ENCODE measurements at regions of chr5 and their contacts with region 1.

Region 1: GRCh38 chr5:126422989-126423788 is at the start of gene GRAMD2B:
- DNase-seq: peak; percentile 83
- H3K4me3 Mint-ChIP-seq: peak within 1 kb of the TSS; percentile 82
- H3K27ac Mint-ChIP-seq: peak within 1 kb of the TSS; percentile 87
- H3K4me1 Mint-ChIP-seq: peaks cover 38% of the 10 kb centered on the region
- H3K27me3 Mint-ChIP-seq: no peaks in the 10 kb centered on the region
- total RNA-seq, gene GRAMD2B: 9.9 to 10.4 TPM

Region 2: GRCh38 chr5:126370796-126371718 is 52.1 kb before region 1 on chr5:
- CTCF ChIA-PET with region 1: no interaction called
- POLR2A ChIA-PET with region 1: no interaction called
- intact Hi-C with region 1: loop called (anchors 2 kb)
- DNase-seq: no peak
- H3K4me3 Mint-ChIP-seq: no peak overlapping the region
- H3K27ac Mint-ChIP-seq: no peak overlapping the region
- H3K4me1 Mint-ChIP-seq: peaks cover 15% of the 10 kb centered on the region
- H3K27me3 Mint-ChIP-seq: no peaks in the 10 kb centered on the region

Region 3: DNA sequence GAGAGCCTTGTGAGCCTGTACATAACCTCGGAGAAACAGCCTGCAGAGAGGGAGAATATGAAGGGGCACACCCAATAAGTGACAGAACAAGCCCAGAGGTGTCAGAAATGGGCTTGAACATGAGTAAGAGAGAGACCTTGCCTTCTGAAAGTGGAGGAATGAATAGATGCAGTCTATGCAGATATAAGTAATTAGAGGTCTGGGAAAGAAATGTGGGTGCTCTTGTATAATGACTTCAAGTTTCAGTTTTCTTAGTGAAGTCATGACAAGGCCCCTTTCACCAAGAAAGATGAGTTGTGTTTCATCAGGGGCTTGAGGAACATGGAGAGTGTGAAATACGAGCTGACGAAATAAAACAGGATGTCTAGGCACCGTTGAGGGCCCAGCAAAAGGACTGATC is 15.1 kb after region 1 on chr5:
- CTCF ChIA-PET with region 1: interaction called, 4 read pairs
- POLR2A ChIA-PET with region 1: interaction called, 20 read pairs
- intact Hi-C with region 1: loop called (anchors 1 kb)
- DNase-seq: peak; percentile 42
- H3K4me3 Mint-ChIP-seq: peak overlapping the region; percentile 9
- H3K27ac Mint-ChIP-seq: peak overlapping the region; percentile 82
- H3K4me1 Mint-ChIP-seq: peaks cover 29% of the 10 kb centered on the region
- H3K27me3 Mint-ChIP-seq: no peaks in the 10 kb centered on the region

Region 4: GRCh38 chr5:126508962-126509279 is 85.7 kb after region 1 on chr5:
- CTCF ChIA-PET with region 1: no interaction called
- POLR2A ChIA-PET with region 1: no interaction called
- intact Hi-C with region 1: loop called (anchors 2 kb)
- DNase-seq: no peak
- H3K4me3 Mint-ChIP-seq: peak overlapping the region; percentile 47
- H3K27ac Mint-ChIP-seq: peak overlapping the region; percentile 78
- H3K4me1 Mint-ChIP-seq: peaks cover 27% of the 10 kb centered on the region
- H3K27me3 Mint-ChIP-seq: no peaks in the 10 kb centered on the region

Region 5: GRCh38 chr5:126600631-126601511 is 177.7 kb after region 1 on chr5 and contains the start of gene PHAX:
- CTCF ChIA-PET with region 1: no interaction called
- POLR2A ChIA-PET with region 1: no interaction called
- intact Hi-C with region 1: loop called (anchors 1 kb)
- DNase-seq: peak; percentile 82
- H3K4me3 Mint-ChIP-seq: peak within 1 kb of the TSS; percentile 99
- H3K27ac Mint-ChIP-seq: peak within 1 kb of the TSS; percentile 97
- H3K4me1 Mint-ChIP-seq: peaks cover 35% of the 10 kb centered on the region
- H3K27me3 Mint-ChIP-seq: no peaks in the 10 kb centered on the region
- total RNA-seq, gene PHAX: 40.7 to 43.2 TPM